Activated naive CD4-positive, alpha-beta T cell treated with anti-CD3 and anti-CD28 coated beads for 36 hours (primary cell): ENCODE measurements at regions of chrX and their contacts with region 1.

Region 1: GRCh38 chrX:108070891-108071290 is 20.5 kb downstream of the PSMD10 start:
- DNase-seq: no peak
- H3K4me3 Mint-ChIP-seq: no peak overlapping the region
- H3K27ac Mint-ChIP-seq: no peak overlapping the region
- H3K4me1 Mint-ChIP-seq: peaks cover 7% of the 10 kb centered on the region
- H3K27me3 Mint-ChIP-seq: no peaks in the 10 kb centered on the region

Region 2: GRCh38 chrX:107654872-107655761 is 415.8 kb before region 1 on chrX:
- CTCF ChIA-PET with region 1: interaction called, 3 read pairs
- intact Hi-C with region 1: loop called (anchors 2 kb)
- DNase-seq: peak; percentile 72
- H3K4me3 Mint-ChIP-seq: no peak overlapping the region
- H3K27ac Mint-ChIP-seq: no peak overlapping the region
- H3K4me1 Mint-ChIP-seq: peaks cover 15% of the 10 kb centered on the region
- H3K27me3 Mint-ChIP-seq: no peaks in the 10 kb centered on the region

Region 3: GRCh38 chrX:107826238-107827029 is 244.5 kb before region 1 on chrX:
- CTCF ChIA-PET with region 1: no interaction called
- intact Hi-C with region 1: loop called (anchors 5 kb)
- DNase-seq: peak; percentile 14
- H3K4me3 Mint-ChIP-seq: peak overlapping the region; percentile 77
- H3K27ac Mint-ChIP-seq: peak overlapping the region; percentile 73
- H3K4me1 Mint-ChIP-seq: peaks cover 53% of the 10 kb centered on the region
- H3K27me3 Mint-ChIP-seq: no peaks in the 10 kb centered on the region

Region 4: DNA sequence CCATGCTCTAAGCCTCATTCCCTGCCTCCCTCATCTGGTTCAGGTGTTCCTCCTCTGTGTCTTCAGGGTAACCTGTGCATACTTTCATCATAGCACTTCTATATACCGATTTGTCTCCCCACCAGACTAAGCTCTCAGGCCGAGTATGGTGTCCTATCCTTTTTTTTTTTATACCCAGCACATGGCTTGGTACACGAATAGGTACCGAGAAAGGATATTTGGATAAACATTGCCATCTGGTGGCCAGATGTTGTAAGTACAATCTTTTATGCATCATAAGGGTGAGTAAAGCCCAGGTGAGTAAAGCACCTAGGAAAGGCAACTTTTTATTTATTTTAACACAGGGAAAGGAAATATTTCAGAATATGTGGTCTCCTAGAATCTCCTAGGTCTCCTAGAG is 176.9 kb before region 1 on chrX:
- CTCF ChIA-PET with region 1: no interaction called
- intact Hi-C with region 1: loop called (anchors 2 kb)
- DNase-seq: peak; percentile 22
- H3K4me3 Mint-ChIP-seq: no peak overlapping the region
- H3K27ac Mint-ChIP-seq: no peak overlapping the region
- H3K4me1 Mint-ChIP-seq: no peaks in the 10 kb centered on the region
- H3K27me3 Mint-ChIP-seq: no peaks in the 10 kb centered on the region

Region 5: DNA sequence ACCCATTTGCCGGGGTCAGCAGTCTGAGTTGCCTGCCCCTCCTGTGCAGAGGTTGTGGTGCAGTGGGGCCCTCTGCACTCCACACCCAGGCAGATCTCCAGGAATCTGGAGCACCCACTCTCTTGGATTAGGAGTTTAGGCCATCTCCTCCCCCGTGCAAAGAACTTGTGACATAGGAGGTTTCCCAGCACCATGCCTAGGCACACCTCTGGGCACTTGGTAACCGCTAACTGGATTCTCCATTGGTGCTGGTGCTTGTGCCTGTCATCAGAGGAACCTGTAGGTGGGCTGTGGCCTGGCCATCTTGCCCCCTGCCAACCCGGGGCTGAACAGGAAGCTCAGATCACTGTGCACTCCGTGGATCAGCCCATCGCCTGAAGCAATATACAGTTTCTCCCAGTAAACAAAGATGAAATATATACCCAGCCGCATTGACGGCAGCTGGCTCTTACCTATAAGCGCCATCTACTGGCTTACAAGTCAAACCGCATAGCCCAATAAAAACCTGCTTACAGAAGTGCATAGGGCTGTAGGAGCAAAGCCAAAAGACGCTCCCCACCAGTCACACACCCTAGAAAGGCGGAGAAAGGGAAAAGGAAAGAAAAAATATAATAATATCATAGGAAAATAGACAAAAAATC is 69.6 kb before region 1 on chrX:
- CTCF ChIA-PET with region 1: interaction called, 3 read pairs
- intact Hi-C with region 1: loop called (anchors 1 kb)
- DNase-seq: peak; percentile 37
- H3K4me3 Mint-ChIP-seq: no peak overlapping the region
- H3K27ac Mint-ChIP-seq: peak overlapping the region; percentile 30
- H3K4me1 Mint-ChIP-seq: peaks cover 5% of the 10 kb centered on the region
- H3K27me3 Mint-ChIP-seq: no peaks in the 10 kb centered on the region

Region 6: DNA sequence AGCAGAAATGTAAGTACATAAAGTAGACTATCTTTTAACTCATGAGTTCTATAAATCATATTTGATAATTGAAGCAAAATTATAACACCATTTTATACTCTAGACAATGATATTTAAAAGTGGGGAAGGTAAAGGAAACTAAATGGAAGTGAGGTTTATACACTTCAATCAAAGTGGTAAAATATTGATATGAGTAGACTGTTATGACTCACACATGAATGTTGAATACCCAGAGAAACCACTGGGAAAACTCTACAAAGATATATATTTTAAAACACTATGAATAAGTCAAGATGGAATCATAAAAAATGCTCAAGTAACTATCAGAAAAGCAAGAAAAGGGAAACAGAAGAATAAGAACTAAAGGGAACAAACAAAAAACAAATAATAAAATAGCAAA is 17.7 kb before region 1 on chrX:
- CTCF ChIA-PET with region 1: no interaction called
- intact Hi-C with region 1: loop called (anchors 2 kb)
- DNase-seq: no peak
- H3K4me3 Mint-ChIP-seq: no peak overlapping the region
- H3K27ac Mint-ChIP-seq: no peak overlapping the region
- H3K4me1 Mint-ChIP-seq: peaks cover 7% of the 10 kb centered on the region
- H3K27me3 Mint-ChIP-seq: no peaks in the 10 kb centered on the region

Region 7: GRCh38 chrX:108091266-108091877 is 20.5 kb after region 1 on chrX and contains the starts of genes ATG4A and PSMD10:
- CTCF ChIA-PET with region 1: no interaction called
- intact Hi-C with region 1: loop called (anchors 1 kb)
- DNase-seq: peak; percentile 94
- H3K4me3 Mint-ChIP-seq: no peak within 1 kb of the TSS
- H3K27ac Mint-ChIP-seq: no peak within 1 kb of the TSS
- H3K4me1 Mint-ChIP-seq: peaks cover 19% of the 10 kb centered on the region
- H3K27me3 Mint-ChIP-seq: no peaks in the 10 kb centered on the region
- total RNA-seq, gene ATG4A: 8.2 to 8.6 TPM
- total RNA-seq, gene PSMD10: 54.6 to 58.8 TPM

Region 8: GRCh38 chrX:108159028-108159670 is 88.3 kb after region 1 on chrX:
- CTCF ChIA-PET with region 1: no interaction called
- intact Hi-C with region 1: no loop called
- DNase-seq: no peak
- H3K4me3 Mint-ChIP-seq: no peak overlapping the region
- H3K27ac Mint-ChIP-seq: no peak overlapping the region
- H3K4me1 Mint-ChIP-seq: no peaks in the 10 kb centered on the region
- H3K27me3 Mint-ChIP-seq: no peaks in the 10 kb centered on the region